Pancreas (tissue), 10 donors: ENCODE measurements at regions of chr11 and their contacts with region 1.

Region 1: DNA sequence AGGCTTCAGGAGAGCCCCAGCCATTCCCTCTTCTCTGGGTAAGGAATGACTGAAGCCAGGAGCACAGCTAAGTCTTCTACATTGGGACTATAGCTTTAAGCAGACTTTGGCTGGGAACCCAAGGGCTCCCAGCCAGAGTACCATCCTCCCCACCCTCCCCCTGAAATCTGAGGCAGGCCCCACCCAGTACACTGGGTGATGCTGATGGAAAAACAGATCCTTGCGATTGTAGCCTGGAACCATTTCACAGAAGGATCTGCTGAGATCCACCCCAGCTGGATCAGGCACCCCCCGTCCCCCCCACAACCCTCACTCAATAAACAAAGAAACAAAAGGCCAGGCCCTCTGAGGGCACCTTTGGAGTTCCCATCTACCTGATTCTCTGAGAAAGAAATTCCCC is 39.8 kb downstream of the IL18BP start:
- DNase-seq: peak in 1 of 6 donors; percentile 27
- ATAC-seq: no peak
- H3K4me3 ChIP-seq: peak overlapping the region in 3 of 4 donors; percentile 28 to 55 (median 53)
- H3K27ac ChIP-seq: peak overlapping the region; percentile 39 to 98 (median 76)
- H3K4me1 ChIP-seq: peaks cover 34 to 39% (median 37%) of the 10 kb centered on the region in 3 donors
- H3K27me3 ChIP-seq: no peaks in the 10 kb centered on the region
- CTCF ChIP-seq: no peak

Region 2: GRCh38 chr11:72085621-72086351 is 47.3 kb after region 1 on chr11:
- intact Hi-C with region 1: loop called in 1 of 3 experiments (anchors 5 kb)
- DNase-seq: no peak
- ATAC-seq: no peak
- H3K4me3 ChIP-seq: no peak overlapping the region
- H3K27ac ChIP-seq: no peak overlapping the region
- H3K4me1 ChIP-seq: peaks cover 0 to 6% (median 5%) of the 10 kb centered on the region in 3 donors
- H3K27me3 ChIP-seq: no peaks in the 10 kb centered on the region
- CTCF ChIP-seq: no peak

Region 3: DNA sequence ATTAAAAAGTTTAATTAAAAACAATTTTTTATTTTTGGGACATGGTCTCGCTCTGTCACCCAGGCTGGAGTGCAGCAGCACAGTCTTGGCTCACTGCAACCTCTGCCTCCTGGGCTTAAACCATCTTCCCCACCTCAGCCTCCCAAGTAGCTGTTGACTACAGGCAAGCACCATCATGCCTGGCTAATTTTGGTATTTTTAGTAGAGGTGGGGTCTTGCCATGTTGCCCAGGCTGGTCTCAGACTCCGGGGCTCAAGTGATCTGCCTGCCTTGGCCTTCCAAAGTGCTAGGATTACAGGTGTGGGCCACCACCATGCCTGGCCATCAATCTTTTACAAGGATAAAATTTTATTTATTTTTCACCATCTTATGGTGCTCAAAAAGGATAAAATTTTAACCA is 248.8 kb after region 1 on chr11:
- intact Hi-C with region 1: no loop called
- DNase-seq: no peak
- ATAC-seq: no peak
- H3K4me3 ChIP-seq: no peak overlapping the region
- H3K27ac ChIP-seq: no peak overlapping the region
- H3K4me1 ChIP-seq: no peaks in the 10 kb centered on the region
- H3K27me3 ChIP-seq: no peaks in the 10 kb centered on the region
- CTCF ChIP-seq: no peak

Region 4: DNA sequence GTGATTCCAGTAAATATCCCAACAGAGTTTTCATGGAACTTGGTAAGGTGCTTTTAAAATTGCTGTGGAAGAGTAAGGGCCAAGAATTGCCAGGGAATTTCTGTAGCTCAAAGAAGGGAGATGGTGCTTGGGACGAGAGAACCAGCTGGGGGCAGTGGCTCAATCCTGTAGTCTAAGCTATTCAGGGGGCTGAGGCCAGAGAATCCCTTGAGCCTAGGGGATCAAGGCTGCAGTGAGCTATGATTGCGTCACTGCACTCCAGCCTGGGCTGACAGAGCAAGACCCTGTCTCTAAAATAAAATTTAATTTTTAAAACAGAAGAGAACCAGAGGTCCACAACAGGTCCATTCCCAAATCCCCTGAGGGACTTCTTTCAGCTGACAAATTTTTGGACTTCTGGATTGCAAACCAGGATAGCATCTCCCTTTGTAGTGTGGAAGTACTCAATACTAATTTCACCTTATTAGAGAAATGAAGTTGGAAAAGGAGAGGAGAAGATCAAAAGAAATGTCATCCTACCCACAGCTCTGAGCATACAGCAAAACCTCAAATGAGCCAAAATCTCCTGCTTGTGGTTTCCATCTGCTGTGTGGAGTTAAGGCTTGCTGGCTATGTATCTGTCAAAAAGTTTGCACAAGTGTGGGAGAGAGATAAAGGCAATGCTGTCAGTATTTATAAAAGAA is 455.1 kb after region 1 on chr11:
- intact Hi-C with region 1: no loop called
- DNase-seq: no peak
- ATAC-seq: no peak
- H3K4me3 ChIP-seq: no peak overlapping the region
- H3K27ac ChIP-seq: no peak overlapping the region
- H3K4me1 ChIP-seq: no peaks in the 10 kb centered on the region
- H3K27me3 ChIP-seq: no peaks in the 10 kb centered on the region
- CTCF ChIP-seq: no peak